ENCODE measurements at regions of chr5 and their contacts with region 1.

Region 1: DNA sequence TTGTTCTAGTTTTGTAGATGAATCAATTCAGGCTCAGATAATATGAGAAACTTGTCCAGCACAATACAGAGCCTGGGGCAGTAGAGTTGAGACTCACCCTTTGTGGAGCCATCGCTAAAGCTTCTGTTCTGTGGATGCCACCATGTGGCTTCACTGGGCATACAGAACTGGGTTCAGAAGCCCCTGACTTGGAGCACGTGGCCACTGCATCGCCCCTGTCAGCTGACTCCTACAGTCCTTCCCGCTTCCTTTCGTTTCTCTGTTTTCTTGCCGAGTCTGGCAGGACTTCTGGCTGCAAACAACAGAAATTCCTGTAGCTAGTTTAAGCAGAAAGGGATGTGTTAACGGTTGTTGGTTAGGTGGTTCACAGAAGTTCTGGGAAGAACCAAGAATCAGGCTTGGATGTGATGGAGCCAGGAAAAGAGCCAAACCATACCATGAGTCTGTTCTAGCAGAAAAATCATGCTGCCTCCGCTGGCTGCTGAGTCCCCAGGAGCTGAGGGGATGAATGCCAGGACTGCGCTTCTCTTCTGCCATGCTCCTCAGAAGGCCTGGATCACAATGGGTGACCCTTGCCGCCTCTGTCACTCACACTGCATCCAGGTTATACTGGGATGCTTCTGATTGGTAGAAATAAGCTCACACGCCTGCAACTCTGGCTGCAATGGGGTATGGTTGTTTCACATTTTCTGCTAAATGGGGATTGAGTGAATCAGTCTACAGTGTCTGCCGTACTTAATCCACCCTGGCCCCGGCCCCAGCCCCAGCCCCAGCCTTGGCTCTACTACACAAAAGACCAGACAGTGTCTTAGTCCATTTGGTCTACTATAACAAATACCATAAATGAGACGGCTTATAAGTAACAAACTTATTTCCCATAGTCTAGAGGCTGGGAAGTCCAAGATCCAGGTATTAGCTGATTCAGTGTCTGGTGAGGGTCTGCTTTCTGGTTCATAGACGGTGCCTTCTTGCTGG is 262.5 kb downstream of the GOLPH3 start:
- DNase-seq: peak; percentile 10 to 86 (median 78)
- H3K4me3 ChIP-seq: peak overlapping the region in 53 of 59 donors; percentile 2 to 59 (median 34)
- H3K27ac ChIP-seq: peak overlapping the region in 58 of 59 donors; percentile 5 to 89 (median 72)
- H3K27me3 ChIP-seq: no peaks in the 10 kb centered on the region
- CTCF ChIP-seq: peak in 52 of 56 donors; percentile 37 to 87 (median 63)

Region 2: DNA sequence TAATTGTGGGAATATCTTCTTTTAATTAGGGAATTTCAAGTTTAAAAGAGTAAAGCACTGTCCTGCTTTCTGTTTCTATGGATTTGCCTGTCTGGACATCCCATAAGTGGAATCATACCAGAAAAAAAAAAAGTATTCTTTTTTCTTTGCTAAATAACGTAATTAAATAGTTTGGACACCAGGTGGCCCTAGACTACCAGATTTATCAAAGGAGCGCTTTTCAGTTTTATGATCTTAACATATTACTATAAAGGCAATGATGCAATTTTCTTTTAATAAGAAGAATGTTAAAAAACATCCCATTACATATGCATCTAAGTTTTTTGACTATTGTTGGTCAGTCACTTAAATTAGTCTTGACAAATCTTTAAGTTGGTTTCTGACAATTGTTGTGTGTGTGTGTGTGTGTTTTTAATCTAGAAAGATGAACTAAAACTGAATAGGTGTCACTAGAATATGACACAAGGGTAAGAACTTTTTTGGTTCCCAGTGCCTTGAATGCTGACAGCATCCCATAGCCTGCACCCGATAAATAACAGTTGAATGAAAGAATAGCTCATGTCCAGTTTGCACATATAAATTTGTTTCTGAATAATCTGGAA is 330.0 kb before region 1 on chr5:
- intact Hi-C with region 1: loop called in 1 of 2 experiments (anchors 5 kb)
- DNase-seq: no peak
- H3K4me3 ChIP-seq: no peak overlapping the region
- H3K27ac ChIP-seq: no peak overlapping the region
- H3K27me3 ChIP-seq: no peaks in the 10 kb centered on the region
- CTCF ChIP-seq: peak; percentile 54 to 90 (median 70)

Region 3: DNA sequence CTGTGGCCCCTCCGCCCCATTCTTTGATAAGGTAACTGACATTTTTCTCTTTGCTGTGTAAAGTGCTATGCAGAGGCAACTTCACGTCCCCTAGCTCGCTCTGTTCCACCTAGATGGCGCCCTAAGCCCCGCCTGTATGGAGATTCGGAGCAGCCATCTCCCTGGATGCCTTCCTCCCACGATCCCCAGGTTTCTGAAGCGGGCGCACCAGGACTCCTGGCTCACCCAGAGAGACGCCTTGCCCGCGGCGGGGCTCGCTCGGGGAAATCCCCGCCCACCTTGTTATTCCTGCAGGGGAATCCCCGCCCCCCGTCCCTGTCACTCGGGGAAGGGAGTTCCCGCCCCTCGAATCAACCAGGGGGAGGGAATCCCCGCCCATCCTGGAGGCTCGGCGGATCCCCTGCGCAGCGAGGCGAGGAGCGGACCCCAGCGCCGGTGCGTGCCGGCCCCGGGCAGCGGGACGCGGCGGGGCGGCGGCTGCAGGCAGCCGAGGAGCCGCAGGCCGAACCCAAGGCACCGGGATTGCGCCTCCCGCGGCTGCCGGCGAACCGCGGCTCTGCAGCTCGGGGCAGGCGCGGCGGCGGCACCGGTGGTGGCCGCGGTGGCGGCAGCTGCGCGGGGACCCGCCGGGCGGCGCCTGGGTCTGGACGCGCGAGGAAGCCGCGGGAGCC is 272.7 kb before region 1 on chr5 and contains the start of gene PDZD2:
- intact Hi-C with region 1: loop called in 1 of 2 experiments (anchors 10 kb)
- DNase-seq: peak; percentile 62 to 92 (median 84)
- H3K4me3 ChIP-seq: peak within 1 kb of the TSS; percentile 59 to 86 (median 73)
- H3K27ac ChIP-seq: peak within 1 kb of the TSS; percentile 27 to 89 (median 74)
- H3K27me3 ChIP-seq: no peaks in the 10 kb centered on the region
- CTCF ChIP-seq: peak in 53 of 56 donors; percentile 10 to 73 (median 51)
- total RNA-seq, gene PDZD2: 40.2 to 232 (median 105) TPM

Region 4: GRCh38 chr5:31753700-31754357 is 157.7 kb before region 1 on chr5:
- intact Hi-C with region 1: no loop called
- DNase-seq: no peak
- H3K4me3 ChIP-seq: no peak overlapping the region
- H3K27ac ChIP-seq: peak overlapping the region in 14 of 59 donors; percentile 2 to 69 (median 23)
- H3K27me3 ChIP-seq: no peaks in the 10 kb centered on the region
- CTCF ChIP-seq: no peak

Region 5: DNA sequence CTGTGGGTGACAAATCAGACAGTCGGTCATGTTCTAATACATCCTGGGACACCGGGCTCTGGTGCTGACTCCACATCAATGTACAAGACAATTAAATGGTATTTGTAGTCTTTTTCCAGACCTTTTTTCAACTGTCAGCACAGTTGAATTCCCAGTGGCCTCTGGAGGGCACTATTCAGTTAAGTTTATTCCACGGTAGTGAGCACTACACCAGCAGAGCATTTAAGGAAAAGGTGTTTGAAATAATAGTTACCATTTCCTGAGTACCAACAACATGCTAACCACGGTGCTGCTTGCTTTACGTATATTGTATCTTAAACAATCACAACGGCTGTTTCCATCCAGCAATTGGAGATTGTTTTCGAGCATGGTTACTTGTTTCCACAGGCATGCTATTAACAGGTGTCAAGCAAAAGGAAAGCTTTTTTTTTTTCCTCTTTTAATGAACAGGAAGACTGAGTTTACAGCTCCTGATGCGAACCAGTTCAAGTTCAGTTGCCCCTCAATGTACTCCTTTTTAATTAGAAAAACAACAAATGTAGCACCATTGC is 86.0 kb before region 1 on chr5:
- intact Hi-C with region 1: loop called (anchors 1 to 5 kb)
- DNase-seq: peak in 5 of 10 donors; percentile 20 to 66 (median 41)
- H3K4me3 ChIP-seq: no peak overlapping the region
- H3K27ac ChIP-seq: peak overlapping the region in 3 of 59 donors; percentile 27 to 51 (median 34)
- H3K27me3 ChIP-seq: no peaks in the 10 kb centered on the region
- CTCF ChIP-seq: peak; percentile 48 to 91 (median 79)

Region 6: DNA sequence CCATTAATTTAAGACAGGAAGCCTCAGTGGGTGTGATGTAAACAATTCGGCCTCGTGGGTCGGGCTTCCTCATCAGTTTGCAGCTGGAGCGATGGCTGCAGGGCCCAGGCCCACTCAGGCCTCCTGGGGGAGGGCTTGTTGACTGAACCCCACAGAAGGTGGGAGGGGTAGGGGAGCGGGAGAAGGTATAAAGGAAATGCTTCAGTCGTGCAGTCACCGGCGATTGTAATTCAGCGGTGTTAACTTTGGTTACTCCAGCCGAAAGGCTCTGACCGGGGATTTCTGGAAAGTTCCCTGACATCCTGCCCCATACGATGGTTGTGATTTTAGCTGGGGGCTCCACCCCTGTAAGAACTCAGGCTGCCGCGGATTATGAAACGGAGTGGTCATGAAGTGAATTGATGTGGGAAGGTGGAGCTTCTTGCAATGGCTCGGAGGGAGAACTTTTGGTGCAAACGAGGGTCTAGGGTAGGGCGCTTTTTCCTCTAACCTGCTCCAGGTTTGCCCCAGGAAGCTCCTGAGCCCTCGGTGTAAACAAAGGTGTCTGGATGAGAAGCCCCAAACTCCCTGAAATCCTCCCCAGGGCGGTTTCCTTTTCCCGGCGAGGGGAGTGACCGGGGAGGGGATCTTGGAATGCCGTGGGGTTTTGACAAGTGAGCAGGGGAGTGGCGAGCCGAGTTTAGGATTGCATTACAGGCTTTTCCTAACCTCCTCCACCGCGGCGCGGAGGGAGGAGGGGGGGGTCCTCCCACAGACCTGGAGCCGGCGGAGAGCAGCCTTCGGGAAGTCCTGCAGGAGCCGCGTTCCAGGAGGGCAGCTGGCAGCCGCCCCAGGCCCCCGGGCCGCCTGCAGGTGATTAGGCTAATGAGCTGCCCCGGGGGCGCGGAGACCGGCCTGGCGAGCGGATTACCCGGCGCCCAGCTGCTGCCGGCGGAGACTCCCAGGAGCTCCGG is 57.1 kb before region 1 on chr5:
- intact Hi-C with region 1: loop called in 1 of 2 experiments (anchors 2 kb)
- DNase-seq: peak in 4 of 10 donors; percentile 34 to 57 (median 50)
- H3K4me3 ChIP-seq: peak overlapping the region; percentile 38 to 93 (median 75)
- H3K27ac ChIP-seq: peak overlapping the region; percentile 2 to 93 (median 79)
- H3K27me3 ChIP-seq: peaks cover 0 to 3% (median 0%) of the 10 kb centered on the region in 45 donors
- CTCF ChIP-seq: no peak

Region 7: GRCh38 chr5:32027717-32028321 is 116.2 kb after region 1 on chr5:
- intact Hi-C with region 1: loop called in 1 of 2 experiments (anchors 10 kb)
- DNase-seq: peak in 2 of 10 donors; percentile 43 to 57
- H3K4me3 ChIP-seq: peak overlapping the region in 46 of 59 donors; percentile 0 to 53 (median 26)
- H3K27ac ChIP-seq: peak overlapping the region; percentile 27 to 96 (median 85)
- H3K27me3 ChIP-seq: no peaks in the 10 kb centered on the region
- CTCF ChIP-seq: no peak